ENCODE measurements at regions of chr15 and their contacts with region 1.

Region 1: DNA sequence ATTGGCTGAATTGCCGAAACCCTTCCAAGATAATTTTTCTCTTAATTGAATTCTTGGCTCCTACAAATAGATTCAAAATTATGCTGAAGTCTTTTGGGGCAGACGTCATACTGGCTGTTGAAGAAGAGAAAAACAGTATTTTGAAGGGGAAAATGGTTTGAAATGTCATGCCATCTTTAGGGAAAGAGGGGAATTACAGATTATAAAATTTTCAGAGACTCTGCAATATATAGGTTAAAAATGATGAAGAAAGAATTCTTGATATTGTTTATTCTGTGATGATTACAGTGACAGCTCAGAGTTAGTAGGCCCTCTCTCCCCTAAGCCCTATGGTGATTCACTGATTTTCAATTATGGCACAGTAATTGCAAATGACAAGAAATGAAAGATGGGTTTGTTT is 86.1 kb downstream of the CGNL1 start:
- DNase-seq: no peak

Region 2: GRCh38 chr15:57340682-57341259 is 121.6 kb before region 1 on chr15:
- intact Hi-C with region 1: loop called in 1 of 2 experiments (anchors 10 kb)
- DNase-seq: no peak